ENCODE measurements at regions of chr13 and their contacts with region 1.

Region 1: DNA sequence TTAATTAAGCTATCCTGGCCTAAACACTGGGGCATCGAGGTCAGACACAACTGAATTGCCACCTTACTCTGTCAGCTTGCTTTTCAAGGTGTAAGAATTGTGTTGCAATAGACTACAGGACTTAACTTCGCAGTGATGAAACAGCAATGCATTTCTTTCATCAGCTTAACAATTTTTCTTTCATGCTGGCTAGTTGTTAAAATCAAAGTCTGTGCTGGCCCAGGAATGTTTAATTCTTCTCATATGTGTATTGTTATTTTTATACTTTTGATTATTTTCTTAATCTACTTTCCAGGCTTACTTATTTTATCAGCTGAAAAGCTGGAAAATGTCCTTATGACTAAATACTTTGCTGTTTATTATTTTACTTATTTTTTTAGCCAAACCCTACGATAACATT is 79.7 kb downstream of the EFNB2 start:
- DNase-seq: no peak
- ATAC-seq: no peak
- H3K4me3 Mint-ChIP-seq: no peak overlapping the region
- H3K27ac Mint-ChIP-seq: no peak overlapping the region
- H3K4me1 Mint-ChIP-seq: no peaks in the 10 kb centered on the region
- H3K27me3 Mint-ChIP-seq: peaks cover 21% of the 10 kb centered on the region

Region 2: DNA sequence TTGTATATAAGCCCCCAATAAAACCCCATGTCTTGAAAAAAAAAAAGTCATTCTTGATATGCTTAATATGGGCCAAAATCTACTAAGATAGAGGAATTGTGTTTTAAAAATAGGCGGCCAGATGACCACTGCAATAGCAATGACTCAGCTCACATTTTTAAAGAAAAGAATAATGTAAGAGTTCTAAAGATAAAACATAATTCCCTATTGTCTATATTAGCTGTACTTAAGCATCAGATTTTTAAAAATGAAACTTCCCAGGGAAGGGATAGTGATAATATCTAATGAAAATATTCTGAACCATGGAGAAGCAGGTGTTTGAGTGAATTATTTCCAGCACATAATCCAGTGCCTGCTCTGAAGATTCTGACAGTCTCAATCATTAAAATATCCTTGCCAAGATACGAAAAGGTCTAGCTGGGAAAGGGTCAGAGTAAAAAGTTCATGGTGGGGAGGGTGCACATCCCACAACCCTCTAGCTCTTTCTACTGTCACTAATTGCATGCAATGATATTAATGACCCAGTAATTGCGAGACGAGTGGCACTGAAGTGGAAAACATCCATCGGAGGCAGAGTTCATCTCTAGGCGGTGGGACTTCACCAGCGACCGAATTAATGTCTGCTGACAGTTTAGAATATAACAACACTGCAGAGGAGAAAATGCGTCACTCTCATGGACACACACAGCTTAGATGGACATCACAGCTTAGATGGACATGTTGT is 48.1 kb after region 1 on chr13:
- CTCF ChIA-PET with region 1: no interaction called
- POLR2A ChIA-PET with region 1: interaction called, 11 read pairs
- intact Hi-C with region 1: no loop called
- DNase-seq: no peak
- ATAC-seq: no peak
- H3K4me3 Mint-ChIP-seq: no peak overlapping the region
- H3K27ac Mint-ChIP-seq: no peak overlapping the region
- H3K4me1 Mint-ChIP-seq: peaks cover 7% of the 10 kb centered on the region
- H3K27me3 Mint-ChIP-seq: peaks cover 22% of the 10 kb centered on the region

Measured in activated CD4-positive, alpha-beta T cell treated with anti-CD3 and anti-CD28 coated beads for 36 hours (primary cell).